ENCODE measurements at regions of chr6 and their contacts with region 1.

Region 1: DNA sequence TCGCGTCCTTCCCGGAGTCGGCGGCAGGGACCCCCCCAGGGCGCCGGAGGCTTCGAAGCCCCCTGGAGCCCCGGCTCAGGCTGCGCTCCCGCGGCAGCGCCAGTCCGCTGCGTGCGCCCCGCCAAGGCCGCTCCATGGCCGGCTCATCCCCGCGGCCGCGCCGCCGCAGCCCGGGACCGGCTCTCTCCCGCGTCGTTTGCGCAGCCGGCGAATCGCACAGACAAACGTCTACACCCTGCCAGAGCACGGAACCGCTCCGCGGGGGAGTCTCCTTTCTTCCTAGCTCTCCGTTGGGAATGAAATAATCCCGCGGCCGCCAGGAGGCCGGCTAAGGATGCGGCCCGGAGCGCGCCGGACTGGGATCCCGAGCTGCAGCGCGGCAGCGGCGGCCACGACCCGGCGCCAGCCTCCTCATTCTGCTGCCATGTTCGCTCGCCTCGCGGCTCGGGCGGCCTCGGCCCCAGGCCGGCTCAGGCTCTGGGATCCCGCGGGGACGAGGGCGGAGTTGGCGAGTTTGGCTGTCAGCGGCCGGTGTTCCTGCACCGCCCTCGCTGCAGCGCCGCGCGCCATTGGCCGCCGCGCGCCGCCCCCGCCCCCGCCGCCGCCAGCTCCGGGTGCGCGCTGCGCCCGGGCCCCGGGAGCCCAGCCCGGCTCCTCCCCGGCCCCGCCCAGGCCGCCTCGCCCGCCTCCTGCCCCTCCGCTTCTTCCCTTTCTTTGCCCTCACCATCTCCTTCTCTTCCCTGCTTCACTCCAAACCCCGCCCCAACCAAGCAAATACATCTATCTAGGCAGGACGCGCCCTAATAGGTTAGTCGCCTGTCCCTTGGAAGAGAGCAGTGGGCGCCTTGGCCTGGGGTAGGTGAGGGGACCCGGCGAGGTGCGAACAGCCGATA is at the start of gene GFOD1:
- DNase-seq: peak; percentile 83
- H3K4me3 ChIP-seq: peak within 1 kb of the TSS; percentile 66 to 73
- H3K27ac ChIP-seq: peak within 1 kb of the TSS; percentile 83 to 84
- H3K4me1 ChIP-seq: no peaks in the 10 kb centered on the region
- H3K27me3 ChIP-seq: no peaks in the 10 kb centered on the region
- CTCF ChIP-seq: peak in 1 of 4 experiments; percentile 23
- POLR2A ChIP-seq: peak; percentile 83
- total RNA-seq, gene GFOD1: 10.0 to 12.2 TPM

Region 2: GRCh38 chr6:12842114-12842513 is 645.3 kb before region 1 on chr6:
- intact Hi-C with region 1: no loop called
- DNase-seq: no peak
- H3K4me3 ChIP-seq: no peak overlapping the region
- H3K27ac ChIP-seq: no peak overlapping the region
- H3K4me1 ChIP-seq: no peaks in the 10 kb centered on the region
- H3K27me3 ChIP-seq: no peaks in the 10 kb centered on the region
- CTCF ChIP-seq: no peak
- POLR2A ChIP-seq: no peak

Region 3: DNA sequence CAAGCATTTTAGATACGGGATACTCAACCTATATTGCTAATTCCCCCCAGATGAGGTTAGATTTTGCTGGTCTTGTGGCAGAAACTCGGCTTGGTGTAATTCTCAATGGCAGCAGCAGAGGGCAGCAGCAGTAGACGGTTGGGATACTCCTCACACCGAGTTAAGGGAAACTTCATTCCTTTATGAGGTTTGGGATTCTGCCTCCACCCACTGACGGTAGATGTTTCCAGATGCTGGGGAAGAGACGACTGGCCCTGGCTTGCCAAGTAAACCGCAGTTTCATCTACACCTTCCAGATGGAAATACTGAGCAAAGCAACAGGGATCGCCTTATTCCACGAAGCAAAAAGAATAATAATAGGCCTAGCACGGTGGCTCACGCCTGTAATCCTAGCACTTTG is 150.8 kb before region 1 on chr6:
- intact Hi-C with region 1: loop called (anchors 5 kb)
- DNase-seq: peak; percentile 74
- H3K4me3 ChIP-seq: no peak overlapping the region
- H3K27ac ChIP-seq: no peak overlapping the region
- H3K4me1 ChIP-seq: no peaks in the 10 kb centered on the region
- H3K27me3 ChIP-seq: no peaks in the 10 kb centered on the region
- CTCF ChIP-seq: peak; percentile 88 to 92 (median 91)
- POLR2A ChIP-seq: no peak

Region 4: DNA sequence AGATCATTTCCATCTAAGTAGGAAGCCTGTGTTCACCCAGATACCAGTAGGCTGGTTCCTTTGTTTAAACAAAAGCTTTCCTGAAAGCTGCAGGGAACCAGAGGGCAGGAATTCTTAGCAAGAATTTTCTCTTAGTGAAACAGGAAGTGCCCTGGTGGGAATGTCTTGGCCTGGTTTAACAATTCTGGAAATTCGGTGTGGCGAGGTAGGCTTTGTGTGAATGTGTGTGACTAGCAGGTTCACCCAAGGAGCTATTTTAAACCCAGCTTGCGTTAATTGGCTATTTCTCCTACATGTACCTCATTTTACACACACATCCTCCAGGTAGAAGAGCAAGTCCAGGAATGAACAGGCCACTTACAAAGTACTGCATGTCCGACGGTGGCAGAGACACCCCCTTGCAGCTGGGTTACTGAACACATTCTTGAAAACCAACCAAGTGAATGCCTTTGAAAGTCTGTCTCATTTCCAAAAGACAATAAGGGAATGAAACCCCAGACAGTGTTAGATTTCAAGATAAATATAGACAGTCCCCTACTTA is 64.6 kb before region 1 on chr6:
- intact Hi-C with region 1: loop called (anchors 5 kb)
- DNase-seq: peak; percentile 8
- H3K4me3 ChIP-seq: no peak overlapping the region
- H3K27ac ChIP-seq: peak overlapping the region; percentile 33 to 50
- H3K4me1 ChIP-seq: no peaks in the 10 kb centered on the region
- H3K27me3 ChIP-seq: no peaks in the 10 kb centered on the region
- CTCF ChIP-seq: no peak
- POLR2A ChIP-seq: no peak

Region 5: GRCh38 chr6:13454286-13455221 is 32.8 kb before region 1 on chr6:
- intact Hi-C with region 1: loop called (anchors 5 kb)
- DNase-seq: no peak
- H3K4me3 ChIP-seq: no peak overlapping the region
- H3K27ac ChIP-seq: no peak overlapping the region
- H3K4me1 ChIP-seq: no peaks in the 10 kb centered on the region
- H3K27me3 ChIP-seq: no peaks in the 10 kb centered on the region
- CTCF ChIP-seq: peak in 1 of 4 experiments; percentile 12
- POLR2A ChIP-seq: no peak

Region 6: GRCh38 chr6:13538084-13538483 is 50.7 kb after region 1 on chr6:
- intact Hi-C with region 1: loop called (anchors 10 kb)
- DNase-seq: no peak
- H3K4me3 ChIP-seq: no peak overlapping the region
- H3K27ac ChIP-seq: no peak overlapping the region
- H3K4me1 ChIP-seq: no peaks in the 10 kb centered on the region
- H3K27me3 ChIP-seq: no peaks in the 10 kb centered on the region
- CTCF ChIP-seq: peak in 3 of 4 experiments; percentile 41 to 60 (median 57)
- POLR2A ChIP-seq: no peak

Region 7: DNA sequence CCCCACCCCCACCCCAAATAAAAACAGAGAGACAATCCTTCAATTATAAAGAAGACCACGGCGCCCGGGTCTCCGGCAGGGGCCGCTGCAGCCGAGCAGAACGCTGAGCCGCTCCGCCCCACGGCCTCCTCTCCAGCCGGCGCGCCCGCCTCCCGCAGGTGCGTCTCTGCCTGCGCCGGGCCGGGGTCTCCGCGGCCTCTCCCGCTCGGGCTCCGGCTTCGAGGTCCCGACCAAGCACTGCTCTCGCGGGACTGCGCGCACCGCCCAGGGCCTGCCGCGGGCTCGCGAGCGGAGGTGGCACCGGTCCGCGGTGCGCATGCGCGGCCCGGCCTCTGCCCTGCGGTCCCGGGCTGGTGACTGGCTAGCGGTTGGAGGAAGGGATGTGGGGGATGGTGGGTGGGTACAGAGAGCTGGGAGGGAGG is 86.8 kb after region 1 on chr6:
- intact Hi-C with region 1: loop called (anchors 5 kb)
- DNase-seq: peak; percentile 94
- H3K4me3 ChIP-seq: peak overlapping the region; percentile 93
- H3K27ac ChIP-seq: peak overlapping the region; percentile 97 to 98
- H3K4me1 ChIP-seq: no peaks in the 10 kb centered on the region
- H3K27me3 ChIP-seq: no peaks in the 10 kb centered on the region
- CTCF ChIP-seq: peak; percentile 45 to 76 (median 57)
- POLR2A ChIP-seq: no peak